ENCODE measurements at regions of chr17 and their contacts with region 1.

Region 1: DNA sequence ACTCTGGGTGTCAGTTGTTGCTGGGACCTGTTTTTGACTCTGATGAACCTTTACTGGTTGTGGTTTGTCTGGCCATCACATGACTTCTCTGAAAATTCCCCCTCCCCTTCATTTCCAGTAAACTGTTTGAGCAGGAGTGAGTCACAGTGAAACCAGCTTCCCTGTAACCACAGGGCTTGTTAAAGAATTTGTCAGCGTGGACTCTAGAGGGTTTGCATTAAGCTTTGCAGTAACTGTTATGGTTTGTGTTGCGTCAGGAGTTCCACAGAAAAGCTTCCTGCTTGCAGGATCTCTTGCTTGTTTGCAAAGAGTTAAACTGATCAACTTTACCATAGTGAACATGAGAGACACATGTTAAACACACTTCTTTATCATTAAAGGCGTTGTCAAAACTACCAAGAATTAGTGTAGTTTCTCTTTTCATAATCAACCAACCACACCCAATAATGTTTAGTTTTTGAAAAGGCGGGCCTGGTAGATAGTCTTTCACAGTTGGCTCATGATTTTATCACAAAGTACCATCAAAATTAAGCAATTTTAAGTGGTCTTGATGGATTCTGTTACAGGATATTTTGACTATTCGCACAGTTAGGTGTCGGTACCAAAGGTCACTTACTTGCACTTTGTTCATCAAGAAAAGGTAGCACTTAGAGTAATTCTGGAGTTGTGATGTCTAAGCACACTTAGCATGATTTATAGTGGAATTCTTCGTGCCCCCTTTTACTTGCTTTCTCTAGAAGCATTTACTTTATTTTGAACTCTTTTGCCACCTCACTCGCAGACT is 79.3 kb downstream of the VMP1 start:
- DNase-seq: peak; percentile 99
- H3K4me3 ChIP-seq: peak overlapping the region; percentile 36
- H3K27ac ChIP-seq: peak overlapping the region; percentile 92
- H3K27me3 ChIP-seq: no peaks in the 10 kb centered on the region
- CTCF ChIP-seq: no peak

Region 2: GRCh38 chr17:59753522-59754467 is 32.9 kb before region 1 on chr17:
- CTCF ChIA-PET with region 1: interaction called, 7 read pairs
- POLR2A ChIA-PET with region 1: interaction called, 22 read pairs
- DNase-seq: peak; percentile 84
- H3K4me3 ChIP-seq: peak overlapping the region; percentile 27
- H3K27ac ChIP-seq: no peak overlapping the region
- H3K27me3 ChIP-seq: no peaks in the 10 kb centered on the region
- CTCF ChIP-seq: peak; percentile 67

Region 3: GRCh38 chr17:59762513-59763374 is 24.0 kb before region 1 on chr17:
- CTCF ChIA-PET with region 1: no interaction called
- POLR2A ChIA-PET with region 1: interaction called, 11 read pairs
- DNase-seq: no peak
- H3K4me3 ChIP-seq: no peak overlapping the region
- H3K27ac ChIP-seq: no peak overlapping the region
- H3K27me3 ChIP-seq: no peaks in the 10 kb centered on the region
- CTCF ChIP-seq: no peak

Region 4: GRCh38 chr17:59829217-59830006 is 42.7 kb after region 1 on chr17:
- CTCF ChIA-PET with region 1: no interaction called
- POLR2A ChIA-PET with region 1: interaction called, 11 read pairs
- DNase-seq: peak; percentile 77
- H3K4me3 ChIP-seq: peak overlapping the region; percentile 14
- H3K27ac ChIP-seq: peak overlapping the region; percentile 85
- H3K27me3 ChIP-seq: no peaks in the 10 kb centered on the region
- CTCF ChIP-seq: no peak